ENCODE measurements at regions of chr11 and their contacts with region 1.

Region 1: GRCh38 chr11:66480117-66480938 is at the start of gene DPP3:
- H3K4me3 Mint-ChIP-seq: peak within 1 kb of the TSS; percentile 86
- H3K27ac Mint-ChIP-seq: peak within 1 kb of the TSS; percentile 93
- H3K4me1 Mint-ChIP-seq: peaks cover 46% of the 10 kb centered on the region
- H3K27me3 Mint-ChIP-seq: no peaks in the 10 kb centered on the region

Region 2: GRCh38 chr11:66282468-66283386 is 197.6 kb before region 1 on chr11:
- intact Hi-C with region 1: no loop called
- H3K4me3 Mint-ChIP-seq: no peak overlapping the region
- H3K27ac Mint-ChIP-seq: no peak overlapping the region
- H3K4me1 Mint-ChIP-seq: peaks cover 45% of the 10 kb centered on the region
- H3K27me3 Mint-ChIP-seq: peaks cover 34% of the 10 kb centered on the region

Region 3: DNA sequence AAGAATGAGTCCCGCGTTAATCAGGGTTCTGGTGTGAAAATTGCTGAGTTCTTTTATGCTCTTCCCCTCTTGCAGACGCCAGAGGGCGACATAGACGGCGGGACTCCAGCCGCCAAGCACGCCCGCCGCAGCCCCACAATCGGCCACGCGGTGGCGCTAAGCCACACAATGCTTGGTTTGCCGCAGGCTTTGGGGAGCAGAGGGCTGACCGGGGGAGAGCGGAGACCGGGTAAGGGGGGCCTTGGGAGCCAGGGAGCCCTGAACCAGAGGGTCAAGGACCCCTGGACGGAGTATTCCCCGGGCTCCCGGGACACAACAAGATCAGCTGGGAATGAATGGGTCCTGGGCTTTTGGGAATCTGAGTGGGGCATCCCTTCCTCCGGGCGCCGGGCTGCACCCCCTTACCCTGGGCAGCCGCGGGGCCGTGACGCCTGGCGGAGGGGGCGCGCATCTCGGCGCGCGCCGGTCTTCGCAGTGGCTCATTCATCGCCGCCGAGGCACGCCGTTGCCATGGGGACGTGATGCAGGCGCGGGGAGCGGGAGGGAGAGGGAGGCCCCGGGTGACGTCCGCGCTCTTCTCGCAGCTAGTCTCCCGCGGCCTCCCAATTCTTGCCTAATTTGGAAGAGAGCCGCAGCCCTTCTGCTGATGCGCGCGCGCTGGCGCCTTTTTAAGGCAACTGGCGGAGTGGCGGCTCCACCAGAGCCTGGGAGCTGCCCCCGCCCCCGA is 71.7 kb before region 1 on chr11:
- intact Hi-C with region 1: loop called (anchors 2 kb)
- H3K4me3 Mint-ChIP-seq: peak overlapping the region; percentile 58
- H3K27ac Mint-ChIP-seq: no peak overlapping the region
- H3K4me1 Mint-ChIP-seq: no peaks in the 10 kb centered on the region
- H3K27me3 Mint-ChIP-seq: peaks cover 53% of the 10 kb centered on the region

Region 4: GRCh38 chr11:66438504-66439466 is 41.5 kb before region 1 on chr11 and contains the start of gene MRPL11:
- intact Hi-C with region 1: loop called (anchors 1 kb)
- H3K4me3 Mint-ChIP-seq: peak within 1 kb of the TSS; percentile 87
- H3K27ac Mint-ChIP-seq: peak within 1 kb of the TSS; percentile 97
- H3K4me1 Mint-ChIP-seq: peaks cover 21% of the 10 kb centered on the region
- H3K27me3 Mint-ChIP-seq: no peaks in the 10 kb centered on the region

Region 5: DNA sequence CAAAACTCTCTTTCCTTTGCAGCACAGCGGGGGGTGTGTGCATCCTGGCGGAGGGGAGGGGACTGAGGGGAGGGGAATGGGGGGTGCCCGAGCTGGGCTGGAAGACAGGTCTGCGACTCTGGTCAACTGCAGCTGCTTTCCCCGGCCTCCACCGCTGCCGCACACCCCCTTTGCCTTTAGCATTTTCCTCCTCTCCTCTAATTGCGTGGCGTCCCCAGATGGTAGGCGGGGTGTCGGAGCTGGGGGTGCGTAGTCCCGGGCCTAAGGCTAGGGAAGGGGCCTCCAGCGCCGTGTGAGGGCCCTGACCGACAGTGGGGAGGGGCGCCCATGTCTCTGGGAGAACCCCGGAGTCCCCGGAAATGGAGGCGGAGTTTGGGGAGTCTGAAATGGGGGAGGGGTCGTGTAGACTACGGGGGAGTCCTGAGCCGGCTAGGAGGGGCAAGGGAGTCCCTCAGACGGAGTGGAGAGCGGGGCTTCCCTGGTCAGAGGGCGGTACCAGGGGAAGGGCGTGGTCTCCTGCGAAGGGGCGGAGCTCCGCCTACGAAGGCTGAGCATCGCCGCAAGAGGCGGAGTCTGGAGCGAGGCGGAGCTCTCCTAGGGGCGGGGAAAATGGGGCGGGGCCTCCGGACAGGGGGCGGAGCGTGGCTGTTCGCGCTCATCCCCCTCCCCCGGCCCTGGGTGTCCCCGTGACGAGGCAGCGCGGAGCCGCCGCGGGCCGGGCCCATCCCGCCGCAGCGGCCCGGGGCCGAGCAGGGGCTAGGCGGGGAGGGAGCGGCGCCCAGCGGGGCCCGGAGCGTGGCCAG is 13.9 kb before region 1 on chr11 and contains the start of gene PELI3:
- intact Hi-C with region 1: loop called (anchors 1 kb)
- H3K4me3 Mint-ChIP-seq: peak within 1 kb of the TSS; percentile 89
- H3K27ac Mint-ChIP-seq: peak within 1 kb of the TSS; percentile 95
- H3K4me1 Mint-ChIP-seq: peaks cover 54% of the 10 kb centered on the region
- H3K27me3 Mint-ChIP-seq: no peaks in the 10 kb centered on the region

Measured in dendritic cell treated with granulocyte-macrophage colony-stimulating factor and Interleukin-4, amounts not matched to agents 40 ng/mL and 50 ng/mL, for 4 days (primary cell).